Activated CD4-positive, alpha-beta memory T cell treated with anti-CD3 and anti-CD28 coated beads for 36 hours (primary cell): ENCODE measurements at regions of chr15 and their contacts with region 1.

Region 1: DNA sequence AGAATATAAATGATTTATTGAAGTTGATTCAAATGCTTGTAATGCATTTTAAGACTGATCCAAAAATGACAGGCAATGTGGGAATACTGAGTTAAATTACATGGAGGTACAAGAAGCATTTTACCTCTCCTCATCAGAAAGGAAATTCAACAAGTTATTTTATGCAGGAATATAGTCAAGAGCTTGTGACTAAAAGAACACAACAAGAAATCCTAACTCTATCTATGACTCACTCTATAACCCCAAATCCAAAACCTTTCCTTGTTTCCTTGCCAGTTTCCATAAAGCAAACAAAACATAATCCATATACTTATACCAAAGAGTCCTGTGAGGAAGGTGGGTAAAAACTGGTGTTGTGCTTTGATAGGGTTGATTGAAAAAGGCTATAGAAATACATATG is 30.8 kb downstream of the SIN3A start:
- DNase-seq: no peak
- H3K4me3 Mint-ChIP-seq: no peak overlapping the region
- H3K27ac Mint-ChIP-seq: no peak overlapping the region
- H3K4me1 Mint-ChIP-seq: peaks cover 13% of the 10 kb centered on the region
- H3K27me3 Mint-ChIP-seq: no peaks in the 10 kb centered on the region

Region 2: GRCh38 chr15:75407083-75407482 is 13.6 kb before region 1 on chr15:
- CTCF ChIA-PET with region 1: no interaction called
- POLR2A ChIA-PET with region 1: no interaction called
- intact Hi-C with region 1: loop called (anchors 1 kb)
- DNase-seq: no peak
- H3K4me3 Mint-ChIP-seq: no peak overlapping the region
- H3K27ac Mint-ChIP-seq: peak overlapping the region; percentile 65
- H3K4me1 Mint-ChIP-seq: peaks cover 55% of the 10 kb centered on the region
- H3K27me3 Mint-ChIP-seq: no peaks in the 10 kb centered on the region